ENCODE measurements at regions of chr20 and their contacts with region 1.

Region 1: GRCh38 chr20:23613676-23614075 is 8.0 kb upstream of the CST9 start:
- DNase-seq: no peak
- ATAC-seq: no peak
- H3K4me3 ChIP-seq: no peak overlapping the region
- H3K4me3 Mint-ChIP-seq: no peak overlapping the region
- H3K27ac ChIP-seq: no peak overlapping the region
- H3K27ac Mint-ChIP-seq: no peak overlapping the region
- H3K4me1 ChIP-seq: no peaks in the 10 kb centered on the region
- H3K4me1 Mint-ChIP-seq: no peaks in the 10 kb centered on the region
- H3K27me3 ChIP-seq: no peaks in the 10 kb centered on the region
- H3K27me3 Mint-ChIP-seq: peaks cover 2% of the 10 kb centered on the region
- CTCF ChIP-seq: no peak

Region 2: DNA sequence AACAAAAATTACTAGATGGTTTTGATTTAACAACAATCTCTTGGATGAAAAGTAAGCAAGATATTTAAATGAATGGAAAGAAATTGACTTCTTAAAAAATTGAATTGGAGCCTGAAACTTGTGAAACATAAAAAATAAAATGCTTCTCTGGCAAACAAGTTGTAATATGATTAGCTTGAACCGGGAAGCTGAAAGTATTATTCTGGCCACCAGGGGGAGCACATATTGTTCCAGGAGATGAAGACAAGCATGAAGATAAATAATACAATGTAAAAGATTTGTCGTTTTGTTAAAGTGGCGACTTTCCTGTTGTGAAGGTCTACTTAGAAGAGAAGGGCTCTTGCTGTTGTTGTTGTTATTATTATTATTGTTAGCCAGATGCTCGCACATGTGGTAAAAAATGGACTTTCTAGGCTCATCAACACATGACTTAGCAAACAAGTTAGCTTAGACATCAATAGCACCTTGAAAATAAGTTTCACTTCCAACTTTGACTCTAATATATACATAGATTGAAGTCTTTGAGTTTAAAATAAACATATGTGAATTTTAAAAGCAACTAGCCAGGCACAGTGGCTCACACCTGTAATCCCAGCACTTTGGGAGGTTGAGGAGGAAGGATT is 1894.0 kb before region 1 on chr20:
- CTCF ChIA-PET with region 1: no interaction called
- POLR2A ChIA-PET with region 1: no interaction called
- intact Hi-C with region 1: loop called in 1 of 2 experiments (anchors 5 kb)
- DNase-seq: peak in 6 of 9 experiments; percentile 14 to 30 (median 19)
- ATAC-seq: no peak
- H3K4me3 ChIP-seq: no peak overlapping the region
- H3K4me3 Mint-ChIP-seq: no peak overlapping the region
- H3K27ac ChIP-seq: no peak overlapping the region
- H3K27ac Mint-ChIP-seq: no peak overlapping the region
- H3K4me1 ChIP-seq: no peaks in the 10 kb centered on the region
- H3K4me1 Mint-ChIP-seq: no peaks in the 10 kb centered on the region
- H3K27me3 ChIP-seq: no peaks in the 10 kb centered on the region
- H3K27me3 Mint-ChIP-seq: peaks cover 32% of the 10 kb centered on the region
- CTCF ChIP-seq: peak; percentile 72

Region 3: GRCh38 chr20:23550232-23550631 is 63.4 kb before region 1 on chr20:
- CTCF ChIA-PET with region 1: no interaction called
- POLR2A ChIA-PET with region 1: no interaction called
- intact Hi-C with region 1: no loop called
- DNase-seq: no peak
- ATAC-seq: no peak
- H3K4me3 ChIP-seq: no peak overlapping the region
- H3K4me3 Mint-ChIP-seq: no peak overlapping the region
- H3K27ac ChIP-seq: no peak overlapping the region
- H3K27ac Mint-ChIP-seq: no peak overlapping the region
- H3K4me1 ChIP-seq: no peaks in the 10 kb centered on the region
- H3K4me1 Mint-ChIP-seq: no peaks in the 10 kb centered on the region
- H3K27me3 ChIP-seq: no peaks in the 10 kb centered on the region
- H3K27me3 Mint-ChIP-seq: no peaks in the 10 kb centered on the region
- CTCF ChIP-seq: no peak